CD4-positive, alpha-beta memory T cell (primary cell): ENCODE measurements at regions of chr12 and their contacts with region 1.

Region 1: GRCh38 chr12:69359531-69360347 is at the start of gene YEATS4:
- DNase-seq: peak; percentile 86 to 96 (median 88)
- H3K4me3 ChIP-seq: peak within 1 kb of the TSS; percentile 67 to 74
- H3K4me3 Mint-ChIP-seq: peak within 1 kb of the TSS; percentile 83 to 97 (median 93)
- H3K27ac ChIP-seq: peak within 1 kb of the TSS; percentile 86
- H3K27ac Mint-ChIP-seq: peak within 1 kb of the TSS; percentile 82 to 96 (median 94)
- H3K4me1 ChIP-seq: peaks cover 11% of the 10 kb centered on the region
- H3K4me1 Mint-ChIP-seq: peaks cover 24 to 29% (median 27%) of the 10 kb centered on the region in 4 donors
- H3K27me3 ChIP-seq: no peaks in the 10 kb centered on the region
- H3K27me3 Mint-ChIP-seq: peaks cover under 1 to 1% of the 10 kb centered on the region in 2 donors
- total RNA-seq, gene YEATS4: 18.2 to 19.6 TPM

Region 2: GRCh38 chr12:69239352-69239921 is 120.3 kb before region 1 on chr12 and contains the start of gene CPSF6:
- CTCF ChIA-PET with region 1: no interaction called
- POLR2A ChIA-PET with region 1: no interaction called
- intact Hi-C with region 1: loop called (anchors 1 kb)
- DNase-seq: peak; percentile 95 to 96 (median 95)
- H3K4me3 ChIP-seq: peak within 1 kb of the TSS; percentile 60 to 94
- H3K4me3 Mint-ChIP-seq: peak within 1 kb of the TSS; percentile 96 to 100 (median 98)
- H3K27ac ChIP-seq: peak within 1 kb of the TSS; percentile 89
- H3K27ac Mint-ChIP-seq: peak within 1 kb of the TSS; percentile 98 to 100 (median 99)
- H3K4me1 ChIP-seq: peaks cover 52% of the 10 kb centered on the region
- H3K4me1 Mint-ChIP-seq: peaks cover 36 to 57% (median 47%) of the 10 kb centered on the region in 4 donors
- H3K27me3 ChIP-seq: no peaks in the 10 kb centered on the region
- H3K27me3 Mint-ChIP-seq: no peaks in the 10 kb centered on the region
- total RNA-seq, gene CPSF6: 109 to 120 TPM

Region 3: GRCh38 chr12:69348162-69348938 is 11.4 kb before region 1 on chr12 and contains the start of gene LYZ:
- CTCF ChIA-PET with region 1: interaction called, 31 read pairs
- POLR2A ChIA-PET with region 1: no interaction called
- intact Hi-C with region 1: no loop called
- DNase-seq: no peak
- H3K4me3 ChIP-seq: peak within 1 kb of the TSS in 1 of 2 donors; percentile 6
- H3K4me3 Mint-ChIP-seq: no peak within 1 kb of the TSS
- H3K27ac ChIP-seq: no peak within 1 kb of the TSS
- H3K27ac Mint-ChIP-seq: peak within 1 kb of the TSS in 1 of 7 donors; percentile 31
- H3K4me1 ChIP-seq: peaks cover 6% of the 10 kb centered on the region
- H3K4me1 Mint-ChIP-seq: peaks cover 0 to 4% (median 2%) of the 10 kb centered on the region in 4 donors
- H3K27me3 ChIP-seq: no peaks in the 10 kb centered on the region
- H3K27me3 Mint-ChIP-seq: peaks cover 0 to 3% of the 10 kb centered on the region in 2 donors
- total RNA-seq, gene LYZ: 40.5 to 42.3 TPM

Region 4: DNA sequence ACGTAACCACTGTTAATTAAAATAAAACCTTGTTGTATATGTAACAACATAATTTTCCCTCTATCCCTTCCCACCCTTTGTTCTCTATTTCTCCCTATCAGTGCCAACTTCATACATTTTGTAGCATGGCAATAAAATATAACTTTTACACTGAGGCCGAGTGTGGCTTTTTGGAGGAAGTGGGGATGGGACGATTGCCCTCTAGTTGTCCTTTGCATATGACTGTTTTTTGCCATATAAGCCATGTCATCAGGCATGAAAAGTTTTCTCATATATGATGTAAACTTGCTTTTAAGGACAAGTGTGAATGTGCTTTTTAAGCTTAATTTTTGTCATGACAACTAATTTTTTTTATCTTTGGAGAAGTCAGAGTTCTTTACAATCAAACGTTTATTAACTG is 219.3 kb after region 1 on chr12:
- CTCF ChIA-PET with region 1: interaction called, 146 read pairs
- POLR2A ChIA-PET with region 1: no interaction called
- intact Hi-C with region 1: no loop called
- DNase-seq: no peak
- H3K4me3 ChIP-seq: no peak overlapping the region
- H3K4me3 Mint-ChIP-seq: no peak overlapping the region
- H3K27ac ChIP-seq: no peak overlapping the region
- H3K27ac Mint-ChIP-seq: no peak overlapping the region
- H3K4me1 ChIP-seq: no peaks in the 10 kb centered on the region
- H3K4me1 Mint-ChIP-seq: peaks cover 0 to 3% (median 0%) of the 10 kb centered on the region in 4 donors
- H3K27me3 ChIP-seq: no peaks in the 10 kb centered on the region
- H3K27me3 Mint-ChIP-seq: no peaks in the 10 kb centered on the region

Region 5: GRCh38 chr12:69738351-69739286 is 378.9 kb after region 1 on chr12 and contains the start of gene RAB3IP:
- CTCF ChIA-PET with region 1: interaction called, 3 read pairs
- POLR2A ChIA-PET with region 1: interaction called, 3 read pairs
- intact Hi-C with region 1: loop called (anchors 1 kb)
- DNase-seq: peak; percentile 88 to 93 (median 89)
- H3K4me3 ChIP-seq: peak within 1 kb of the TSS; percentile 50 to 80
- H3K4me3 Mint-ChIP-seq: peak within 1 kb of the TSS; percentile 85 to 93 (median 87)
- H3K27ac ChIP-seq: peak within 1 kb of the TSS; percentile 74
- H3K27ac Mint-ChIP-seq: peak within 1 kb of the TSS; percentile 80 to 88 (median 85)
- H3K4me1 ChIP-seq: peaks cover 17% of the 10 kb centered on the region
- H3K4me1 Mint-ChIP-seq: peaks cover 14 to 32% (median 21%) of the 10 kb centered on the region in 4 donors
- H3K27me3 ChIP-seq: no peaks in the 10 kb centered on the region
- H3K27me3 Mint-ChIP-seq: peaks cover 3 to 6% of the 10 kb centered on the region in 2 donors
- total RNA-seq, gene RAB3IP: 38.6 to 40.3 TPM